Right ventricle myocardium inferior (tissue), 1 donor: ENCODE measurements at regions of chr2 and their contacts with region 1.

Region 1: DNA sequence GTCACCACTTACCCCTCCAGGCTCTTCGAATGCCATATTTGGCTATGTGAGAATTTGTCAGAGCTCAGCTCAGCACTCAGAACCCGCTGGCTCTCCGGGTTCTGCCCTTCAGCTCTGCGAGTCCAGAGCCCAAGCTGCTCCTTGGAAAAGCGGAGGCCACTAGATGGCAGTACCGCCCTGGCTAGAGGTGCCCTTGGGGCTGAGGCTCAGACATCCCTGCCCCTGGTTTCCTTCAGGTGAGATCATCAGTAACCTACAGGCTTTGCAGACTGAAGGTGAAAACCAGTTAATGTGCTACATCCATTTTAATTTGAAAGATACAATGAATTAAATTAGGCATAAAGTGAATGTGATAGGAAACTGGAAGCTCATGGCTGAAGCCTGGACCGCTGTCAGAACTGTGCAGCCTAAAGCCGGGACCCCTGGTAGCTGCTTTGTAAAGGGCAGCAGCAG is 285.6 kb downstream of the AGAP1 start:
- DNase-seq: no peak
- ATAC-seq: peak; percentile 75

Region 2: DNA sequence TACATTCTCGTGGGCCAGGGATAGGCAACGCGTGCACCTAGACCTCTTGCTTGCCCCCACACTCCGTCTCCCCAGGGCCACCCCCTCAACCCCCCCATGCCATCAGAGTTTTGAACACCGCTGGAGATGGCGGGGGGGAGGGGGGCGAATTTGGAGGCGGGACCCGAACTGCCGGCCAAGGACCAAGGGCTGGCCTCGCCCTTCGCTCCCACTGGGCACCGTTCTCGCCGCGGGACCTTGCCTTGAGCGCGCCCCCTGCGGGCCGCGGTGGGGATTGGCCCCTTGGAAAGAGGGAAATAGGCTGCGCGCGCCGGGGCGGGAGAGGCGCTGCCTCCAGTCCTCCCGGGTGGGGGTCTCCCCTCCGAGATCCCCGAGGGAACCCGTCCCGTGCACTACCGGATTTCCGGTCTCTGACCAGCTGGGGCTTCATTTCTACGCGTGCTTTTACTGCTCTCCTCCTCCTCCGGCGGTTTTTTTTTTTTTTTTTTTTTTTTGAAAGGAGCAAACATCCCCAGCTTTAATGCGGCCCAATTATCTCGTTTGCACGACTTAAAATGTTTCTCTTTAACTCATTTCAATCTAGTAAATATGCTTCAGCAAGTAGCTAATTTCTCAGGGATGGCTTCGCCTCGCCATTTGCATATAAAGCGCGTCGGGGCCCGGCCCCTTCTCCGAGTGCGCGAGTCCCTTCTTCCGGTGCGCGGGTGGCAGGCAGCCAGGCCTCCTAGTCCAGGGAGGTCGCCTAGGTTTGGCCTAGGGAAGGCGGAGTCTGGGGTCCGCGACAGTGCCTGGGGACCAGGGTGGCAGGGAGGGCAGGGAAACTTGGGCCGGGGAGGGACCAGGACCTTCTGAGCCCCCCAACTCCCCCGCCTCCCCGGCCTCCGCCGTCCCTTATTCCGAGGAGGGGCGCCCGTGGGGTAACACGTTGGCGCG is 398.8 kb after region 1 on chr2:
- intact Hi-C with region 1: loop called (anchors 2 kb)
- DNase-seq: peak; percentile 67
- ATAC-seq: peak; percentile 47